CD8-positive, alpha-beta T cell (primary cell): ENCODE measurements at regions of chr3 and their contacts with region 1.

Region 1: DNA sequence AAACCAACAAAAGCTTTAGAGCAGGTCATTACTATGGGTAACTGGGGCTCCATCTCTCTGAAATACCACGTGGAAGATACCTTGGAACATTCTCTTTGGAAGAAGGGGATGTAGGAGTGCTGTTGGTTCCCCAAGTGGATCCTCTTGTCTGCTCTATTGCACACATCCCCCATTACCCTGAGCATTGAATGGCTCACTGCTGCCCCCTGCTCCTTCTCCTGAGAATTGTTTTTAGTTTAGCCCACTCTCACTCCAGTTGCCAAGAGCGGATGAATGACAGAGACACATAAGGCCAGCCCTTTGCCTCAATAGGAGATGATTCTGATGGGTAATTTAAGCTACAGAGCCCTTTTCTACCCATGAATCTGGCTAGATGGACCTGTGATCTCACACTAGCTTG is 135.6 kb upstream of the SUCLG2 start:
- DNase-seq: peak; percentile 47 to 85 (median 64)
- ATAC-seq: peak; percentile 78
- H3K4me3 ChIP-seq: no peak overlapping the region
- H3K4me3 Mint-ChIP-seq: no peak overlapping the region
- H3K27ac ChIP-seq: no peak overlapping the region
- H3K27ac Mint-ChIP-seq: no peak overlapping the region
- H3K4me1 ChIP-seq: peaks cover 6% of the 10 kb centered on the region
- H3K4me1 Mint-ChIP-seq: peaks cover 13% of the 10 kb centered on the region
- H3K27me3 ChIP-seq: no peaks in the 10 kb centered on the region
- H3K27me3 Mint-ChIP-seq: no peaks in the 10 kb centered on the region
- CTCF ChIP-seq: peak; percentile 70

Region 2: GRCh38 chr3:67384760-67385397 is 405.2 kb before region 1 on chr3:
- CTCF ChIA-PET with region 1: interaction called, 66 read pairs
- POLR2A ChIA-PET with region 1: no interaction called
- intact Hi-C with region 1: loop called (anchors 1 kb)
- DNase-seq: peak in 7 of 9 experiments; percentile 4 to 54 (median 38)
- ATAC-seq: no peak
- H3K4me3 ChIP-seq: no peak overlapping the region
- H3K4me3 Mint-ChIP-seq: no peak overlapping the region
- H3K27ac ChIP-seq: no peak overlapping the region
- H3K27ac Mint-ChIP-seq: peak overlapping the region; percentile 18
- H3K4me1 ChIP-seq: no peaks in the 10 kb centered on the region
- H3K4me1 Mint-ChIP-seq: peaks cover 12% of the 10 kb centered on the region
- H3K27me3 ChIP-seq: no peaks in the 10 kb centered on the region
- H3K27me3 Mint-ChIP-seq: no peaks in the 10 kb centered on the region
- CTCF ChIP-seq: peak; percentile 45

Region 3: DNA sequence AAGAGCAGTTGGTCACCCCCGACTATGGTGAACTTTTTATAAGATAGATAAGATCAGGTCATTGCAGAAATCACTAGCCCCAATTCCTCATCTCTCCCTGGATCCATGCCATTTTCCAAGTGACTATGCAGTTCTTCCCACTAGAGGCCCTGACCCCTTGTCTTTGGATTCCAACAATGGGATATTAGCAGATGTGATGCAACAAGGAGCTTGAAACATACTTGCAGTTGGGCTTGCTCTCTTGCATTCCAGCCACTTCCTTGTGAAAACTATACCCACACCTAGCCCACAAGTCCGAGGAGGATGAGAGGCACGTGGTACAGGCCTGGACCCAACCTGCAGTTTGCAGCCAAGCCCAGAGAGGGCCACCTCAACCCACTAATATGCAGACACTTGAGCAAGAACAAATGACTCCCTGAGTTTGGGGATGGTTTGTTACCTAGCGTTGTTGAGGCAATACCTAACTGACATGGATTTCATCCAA is 196.2 kb before region 1 on chr3:
- CTCF ChIA-PET with region 1: interaction called, 13 read pairs
- POLR2A ChIA-PET with region 1: no interaction called
- intact Hi-C with region 1: loop called (anchors 5 kb)
- DNase-seq: peak in 2 of 9 experiments; percentile 34 to 49
- ATAC-seq: no peak
- H3K4me3 ChIP-seq: no peak overlapping the region
- H3K4me3 Mint-ChIP-seq: no peak overlapping the region
- H3K27ac ChIP-seq: no peak overlapping the region
- H3K27ac Mint-ChIP-seq: no peak overlapping the region
- H3K4me1 ChIP-seq: peaks cover 29% of the 10 kb centered on the region
- H3K4me1 Mint-ChIP-seq: peaks cover 78% of the 10 kb centered on the region
- H3K27me3 ChIP-seq: no peaks in the 10 kb centered on the region
- H3K27me3 Mint-ChIP-seq: no peaks in the 10 kb centered on the region
- CTCF ChIP-seq: no peak

Region 4: DNA sequence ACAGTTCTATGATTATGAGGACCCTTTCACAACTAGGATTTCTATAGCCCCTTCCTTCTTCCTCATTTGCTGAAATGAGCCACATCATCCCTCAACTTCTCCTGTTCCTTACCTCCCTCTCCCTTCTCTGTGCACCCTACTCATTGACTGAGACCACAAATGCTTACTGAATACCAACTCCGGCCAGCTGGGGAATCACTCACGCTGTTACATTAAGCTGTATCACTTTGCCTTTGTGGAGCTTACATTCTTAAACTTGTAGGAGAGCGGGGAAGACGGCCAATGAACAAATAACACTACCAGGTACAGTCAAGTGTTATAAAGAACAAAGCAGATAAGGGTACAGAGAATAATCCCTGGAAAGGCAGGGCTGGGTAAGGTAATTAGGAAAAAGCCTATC is 141.3 kb before region 1 on chr3:
- CTCF ChIA-PET with region 1: interaction called, 11 read pairs
- POLR2A ChIA-PET with region 1: no interaction called
- intact Hi-C with region 1: no loop called
- DNase-seq: no peak
- ATAC-seq: no peak
- H3K4me3 ChIP-seq: no peak overlapping the region
- H3K4me3 Mint-ChIP-seq: no peak overlapping the region
- H3K27ac ChIP-seq: no peak overlapping the region
- H3K27ac Mint-ChIP-seq: no peak overlapping the region
- H3K4me1 ChIP-seq: peaks cover 56% of the 10 kb centered on the region
- H3K4me1 Mint-ChIP-seq: peaks cover 92% of the 10 kb centered on the region
- H3K27me3 ChIP-seq: no peaks in the 10 kb centered on the region
- H3K27me3 Mint-ChIP-seq: no peaks in the 10 kb centered on the region
- CTCF ChIP-seq: no peak

Region 5: GRCh38 chr3:67745296-67745695 is 44.7 kb before region 1 on chr3:
- CTCF ChIA-PET with region 1: no interaction called
- POLR2A ChIA-PET with region 1: no interaction called
- intact Hi-C with region 1: no loop called
- DNase-seq: no peak
- ATAC-seq: no peak
- H3K4me3 ChIP-seq: no peak overlapping the region
- H3K4me3 Mint-ChIP-seq: no peak overlapping the region
- H3K27ac ChIP-seq: no peak overlapping the region
- H3K27ac Mint-ChIP-seq: no peak overlapping the region
- H3K4me1 ChIP-seq: peaks cover 11% of the 10 kb centered on the region
- H3K4me1 Mint-ChIP-seq: peaks cover 36% of the 10 kb centered on the region
- H3K27me3 ChIP-seq: no peaks in the 10 kb centered on the region
- H3K27me3 Mint-ChIP-seq: no peaks in the 10 kb centered on the region
- CTCF ChIP-seq: no peak

Region 6: GRCh38 chr3:68876112-68876713 is 1086.2 kb after region 1 on chr3:
- CTCF ChIA-PET with region 1: no interaction called
- POLR2A ChIA-PET with region 1: no interaction called
- intact Hi-C with region 1: loop called in 1 of 2 experiments (anchors 10 kb)
- DNase-seq: peak in 4 of 9 experiments; percentile 18 to 69 (median 45)
- ATAC-seq: peak; percentile 61
- H3K4me3 ChIP-seq: no peak overlapping the region
- H3K4me3 Mint-ChIP-seq: no peak overlapping the region
- H3K27ac ChIP-seq: no peak overlapping the region
- H3K27ac Mint-ChIP-seq: no peak overlapping the region
- H3K4me1 ChIP-seq: no peaks in the 10 kb centered on the region
- H3K4me1 Mint-ChIP-seq: no peaks in the 10 kb centered on the region
- H3K27me3 ChIP-seq: peaks cover 0 to 3% of the 10 kb centered on the region in 2 experiments
- H3K27me3 Mint-ChIP-seq: peaks cover 14% of the 10 kb centered on the region
- CTCF ChIP-seq: peak; percentile 87